ENCODE measurements at regions of chr1 and their contacts with region 1.

Region 1: DNA sequence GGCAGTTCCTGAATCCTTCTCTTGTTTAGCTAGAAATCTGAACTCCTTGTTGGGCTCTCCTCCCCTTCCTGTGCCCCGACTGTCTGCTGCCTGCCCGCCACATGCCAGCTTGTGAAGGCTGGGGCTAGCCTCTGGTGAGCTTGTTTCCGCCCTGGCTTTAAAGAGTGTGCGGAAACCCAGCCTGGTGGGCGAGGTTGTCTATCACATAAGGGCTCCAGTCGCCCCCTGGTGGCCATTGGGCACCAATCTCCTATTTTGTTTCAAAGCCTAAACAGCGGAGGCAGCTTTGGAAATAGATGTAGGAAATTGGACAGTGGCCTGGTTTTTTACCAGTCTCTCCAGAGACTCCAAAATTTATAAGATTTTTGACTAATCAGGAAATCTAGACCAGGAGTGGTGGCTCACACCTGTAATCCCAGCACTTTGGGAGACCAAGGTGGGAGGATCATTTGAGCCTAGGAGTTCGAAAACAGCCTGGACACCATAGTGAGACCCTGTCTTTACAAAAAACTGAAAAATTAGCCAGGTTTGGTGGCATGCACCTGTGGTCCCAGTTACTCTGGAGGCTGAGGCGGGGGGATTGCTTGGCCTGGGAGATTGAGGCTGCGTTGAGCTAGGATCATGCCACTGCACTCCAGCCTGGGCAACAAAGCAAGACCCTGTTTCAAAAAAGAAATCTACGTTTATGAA is 9.8 kb downstream of the ATP8B2 start:
- DNase-seq: peak; percentile 94
- H3K4me3 Mint-ChIP-seq: no peak overlapping the region
- H3K27ac Mint-ChIP-seq: peak overlapping the region; percentile 79
- H3K4me1 Mint-ChIP-seq: peaks cover 66% of the 10 kb centered on the region
- H3K27me3 Mint-ChIP-seq: no peaks in the 10 kb centered on the region

Region 2: DNA sequence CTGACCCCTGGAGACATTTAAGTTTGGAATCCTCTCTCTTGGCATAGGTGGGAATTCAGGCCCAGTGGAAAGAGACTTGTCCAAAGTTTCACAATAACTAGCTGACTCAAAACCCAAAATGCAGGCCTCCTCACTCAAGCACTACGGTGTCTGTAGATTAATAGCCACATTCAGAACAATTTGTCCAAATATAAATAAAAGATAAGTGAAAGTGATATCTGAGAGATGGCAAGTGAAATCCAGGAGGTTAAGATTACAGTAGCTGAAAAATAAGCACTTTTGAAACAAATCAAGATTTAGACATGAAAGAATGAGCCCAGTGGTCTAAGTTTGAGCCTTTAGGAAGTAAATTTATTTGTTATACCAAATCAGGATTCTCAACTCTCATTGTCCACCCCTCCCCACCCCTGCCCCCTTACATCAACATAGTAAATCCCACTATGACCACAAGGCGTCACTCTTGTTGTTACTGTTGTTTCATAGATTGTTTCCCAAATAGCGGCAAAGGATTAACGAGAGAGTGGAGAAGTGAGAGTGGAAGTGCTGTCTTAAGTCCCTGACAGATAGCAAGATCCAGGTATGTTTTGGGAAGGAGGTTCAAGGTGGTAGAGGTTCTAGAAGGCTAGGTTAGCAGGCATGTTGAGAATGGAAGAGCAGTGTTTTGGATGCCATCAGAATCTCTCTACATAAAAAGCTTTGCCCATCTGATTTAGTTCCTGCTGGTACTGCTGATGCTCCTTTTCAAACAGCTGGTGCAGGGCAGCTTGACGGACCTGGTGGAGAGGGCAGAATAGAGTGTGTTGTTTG is 136.2 kb before region 1 on chr1:
- CTCF ChIA-PET with region 1: interaction called, 27 read pairs
- POLR2A ChIA-PET with region 1: no interaction called
- intact Hi-C with region 1: loop called (anchors 2 kb)
- DNase-seq: peak; percentile 47
- H3K4me3 Mint-ChIP-seq: no peak overlapping the region
- H3K27ac Mint-ChIP-seq: no peak overlapping the region
- H3K4me1 Mint-ChIP-seq: no peaks in the 10 kb centered on the region
- H3K27me3 Mint-ChIP-seq: peaks cover under 1% of the 10 kb centered on the region

Region 3: DNA sequence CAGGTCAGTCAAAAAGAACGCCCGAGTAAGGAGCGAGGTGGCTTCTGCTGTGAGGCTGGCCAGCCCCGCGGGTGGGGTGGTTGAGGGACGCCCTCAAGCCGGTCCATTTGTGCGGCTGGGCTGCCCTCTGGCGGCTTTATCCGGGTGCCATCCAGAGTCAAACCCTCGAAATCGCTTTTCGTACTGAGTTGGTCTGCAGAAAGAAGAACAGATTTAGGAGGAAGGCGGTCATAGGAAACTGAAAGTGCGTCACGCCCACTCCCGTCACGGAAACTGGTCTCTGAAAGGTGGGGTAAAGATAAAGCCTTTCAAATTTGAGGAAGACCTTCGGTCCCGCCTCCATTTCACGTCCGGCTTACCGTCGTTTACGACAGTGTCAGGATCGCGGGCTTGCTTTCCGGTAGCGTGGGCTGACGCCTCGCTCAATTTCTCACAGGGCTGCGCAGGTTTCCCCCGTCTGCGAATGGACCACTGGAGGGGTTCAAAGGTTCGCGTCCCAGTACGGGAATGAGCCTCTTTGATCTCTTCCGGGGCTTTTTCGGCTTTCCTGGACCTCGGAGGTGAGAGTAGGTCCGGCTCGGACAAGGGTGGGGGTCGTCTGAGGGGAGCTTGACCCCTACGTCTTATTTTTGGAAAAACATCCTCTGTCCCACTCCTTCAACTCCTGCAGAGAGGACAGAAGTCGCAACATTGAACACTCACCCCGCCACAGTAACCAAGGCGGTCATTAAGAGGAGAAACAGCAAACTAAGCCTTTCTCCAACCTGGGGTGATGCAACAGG is 62.8 kb before region 1 on chr1 and contains the start of gene HAX1:
- CTCF ChIA-PET with region 1: interaction called, 98 read pairs
- POLR2A ChIA-PET with region 1: interaction called, 4 read pairs
- intact Hi-C with region 1: loop called (anchors 2 kb)
- DNase-seq: peak; percentile 99
- H3K4me3 Mint-ChIP-seq: peak within 1 kb of the TSS; percentile 99
- H3K27ac Mint-ChIP-seq: peak within 1 kb of the TSS; percentile 99
- H3K4me1 Mint-ChIP-seq: peaks cover 34% of the 10 kb centered on the region
- H3K27me3 Mint-ChIP-seq: no peaks in the 10 kb centered on the region
- total RNA-seq, gene HAX1: 168 to 169 TPM

Region 4: GRCh38 chr1:154304664-154305337 is 30.4 kb before region 1 on chr1:
- CTCF ChIA-PET with region 1: interaction called, 25 read pairs
- POLR2A ChIA-PET with region 1: no interaction called
- intact Hi-C with region 1: no loop called
- DNase-seq: peak; percentile 83
- H3K4me3 Mint-ChIP-seq: no peak overlapping the region
- H3K27ac Mint-ChIP-seq: peak overlapping the region; percentile 38
- H3K4me1 Mint-ChIP-seq: peaks cover 29% of the 10 kb centered on the region
- H3K27me3 Mint-ChIP-seq: no peaks in the 10 kb centered on the region

Region 5: DNA sequence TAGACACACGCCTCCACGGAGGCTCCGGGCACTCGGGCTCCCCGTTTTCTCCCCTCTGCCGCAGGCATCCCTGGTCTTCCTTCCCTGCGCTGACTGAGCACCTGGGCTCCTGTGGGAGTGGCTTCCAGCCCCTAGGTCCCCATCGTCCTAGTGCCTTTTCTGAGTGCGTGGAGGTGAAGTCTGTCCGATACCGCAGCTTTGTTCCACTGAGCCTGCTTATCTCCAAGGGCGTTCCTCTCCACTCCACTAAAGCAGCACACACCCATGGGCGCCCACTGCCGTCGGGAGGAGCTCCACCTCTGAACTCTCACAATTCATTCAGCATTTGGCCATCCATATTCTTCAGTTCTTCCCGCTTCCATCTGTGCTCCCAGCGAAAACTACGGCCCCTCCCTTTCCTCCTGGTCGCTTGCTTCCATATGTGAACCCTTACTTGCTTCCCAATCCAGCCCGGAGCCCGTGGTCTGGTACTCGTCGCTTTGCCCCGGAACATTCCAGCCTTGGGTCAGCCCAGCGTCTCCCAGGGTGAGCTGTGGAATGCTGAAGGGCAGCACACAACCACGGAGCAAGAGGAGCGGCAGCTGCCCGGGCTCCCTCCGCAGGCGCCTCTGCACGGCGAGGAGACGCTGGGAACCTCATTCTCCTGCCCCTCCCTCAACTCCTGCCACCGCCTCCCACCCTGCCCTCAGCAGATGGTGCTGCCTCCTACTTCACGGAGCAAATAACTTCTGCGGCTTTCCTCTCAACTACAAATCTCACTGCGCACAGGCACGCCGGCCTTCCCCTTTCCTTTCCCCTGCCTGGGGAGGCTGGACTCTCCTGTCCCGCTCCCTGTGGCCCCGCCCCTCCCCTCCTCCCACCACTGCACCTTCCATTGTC is 17.6 kb after region 1 on chr1:
- CTCF ChIA-PET with region 1: interaction called, 177 read pairs
- POLR2A ChIA-PET with region 1: no interaction called
- intact Hi-C with region 1: no loop called
- DNase-seq: peak; percentile 81
- H3K4me3 Mint-ChIP-seq: peak overlapping the region; percentile 72
- H3K27ac Mint-ChIP-seq: peak overlapping the region; percentile 82
- H3K4me1 Mint-ChIP-seq: peaks cover 41% of the 10 kb centered on the region
- H3K27me3 Mint-ChIP-seq: no peaks in the 10 kb centered on the region

Region 6: DNA sequence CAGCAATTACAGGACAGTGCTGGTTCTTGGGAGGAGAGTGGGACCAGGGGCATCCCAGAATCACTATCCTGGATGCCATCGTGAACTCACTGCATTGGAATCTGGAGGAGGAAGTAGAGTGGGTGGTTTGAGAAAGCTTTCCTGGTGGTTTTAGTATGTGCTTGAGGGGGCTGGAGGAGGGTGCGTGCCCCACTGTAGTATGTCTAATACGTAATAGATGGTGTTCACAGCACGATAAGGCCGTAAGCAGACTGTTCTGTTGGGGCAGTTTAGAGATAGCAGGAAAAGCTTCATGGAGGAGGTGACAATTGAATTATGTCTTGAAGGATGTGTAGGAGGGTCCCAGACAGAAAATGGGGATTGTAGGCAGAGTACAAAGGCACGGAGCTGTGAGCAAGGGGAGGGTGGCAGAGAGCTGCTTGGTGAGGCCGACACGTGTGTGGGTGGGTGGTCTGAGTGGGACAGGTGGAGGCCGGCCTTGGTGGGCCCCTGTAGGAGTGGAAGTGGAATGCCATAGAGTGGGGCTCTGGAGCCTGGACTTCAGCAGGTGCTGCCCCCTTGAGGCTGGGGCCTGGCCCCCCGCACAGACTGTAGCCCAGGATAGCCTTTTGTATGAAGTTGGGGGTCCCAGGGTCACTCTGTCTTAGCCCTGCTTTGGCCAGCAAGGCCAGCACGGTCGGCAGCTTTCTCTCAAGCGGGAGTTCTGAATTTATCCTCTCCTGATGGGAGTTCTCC is 107.0 kb after region 1 on chr1:
- CTCF ChIA-PET with region 1: interaction called, 16 read pairs
- POLR2A ChIA-PET with region 1: no interaction called
- intact Hi-C with region 1: no loop called
- DNase-seq: no peak
- H3K4me3 Mint-ChIP-seq: no peak overlapping the region
- H3K27ac Mint-ChIP-seq: peak overlapping the region; percentile 61
- H3K4me1 Mint-ChIP-seq: peaks cover 71% of the 10 kb centered on the region
- H3K27me3 Mint-ChIP-seq: no peaks in the 10 kb centered on the region

Region 7: DNA sequence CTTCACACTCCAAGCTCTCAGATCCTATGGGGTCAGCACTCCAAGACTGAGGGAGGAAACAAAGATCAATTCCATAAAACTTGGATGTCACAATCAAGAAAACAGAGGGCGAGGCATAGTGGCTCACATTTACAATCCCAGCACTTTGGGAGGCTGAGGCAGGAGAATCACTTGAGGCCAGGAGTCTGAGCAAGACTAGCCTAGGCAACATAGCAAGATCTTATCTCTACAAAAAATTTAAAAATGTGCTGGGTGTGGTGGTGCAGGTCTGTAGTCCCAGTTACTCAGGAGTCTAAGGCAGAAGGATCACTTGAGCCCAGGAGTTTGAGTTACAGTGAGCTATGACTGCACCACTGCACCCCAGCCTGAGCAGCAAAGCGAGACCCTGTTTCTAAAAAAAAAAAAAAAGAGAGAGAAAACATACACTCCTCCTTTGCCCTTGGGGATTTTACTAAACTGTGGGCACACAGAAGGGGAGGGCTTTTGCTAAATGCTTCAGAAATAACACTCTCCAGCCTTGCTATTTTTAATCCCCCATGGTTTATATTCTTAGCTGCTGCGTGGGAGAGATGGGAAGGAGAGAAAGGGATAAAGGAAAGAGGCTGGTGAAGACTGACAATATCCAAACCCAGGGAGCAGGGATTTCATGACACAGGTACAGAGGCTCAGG is 1625.0 kb after region 1 on chr1:
- CTCF ChIA-PET with region 1: no interaction called
- POLR2A ChIA-PET with region 1: no interaction called
- intact Hi-C with region 1: no loop called
- DNase-seq: no peak
- H3K4me3 Mint-ChIP-seq: no peak overlapping the region
- H3K27ac Mint-ChIP-seq: peak overlapping the region; percentile 73
- H3K4me1 Mint-ChIP-seq: peaks cover 12% of the 10 kb centered on the region
- H3K27me3 Mint-ChIP-seq: no peaks in the 10 kb centered on the region